ENCODE measurements at regions of chr18 and their contacts with region 1.

Region 1: GRCh38 chr18:46051731-46052461 is 20.2 kb downstream of the PSTPIP2 start:
- DNase-seq: no peak
- ATAC-seq: peak in 1 of 8 donors; percentile 27
- H3K4me3 ChIP-seq: no peak overlapping the region
- H3K27ac ChIP-seq: peak overlapping the region in 1 of 10 donors; percentile 20
- H3K4me1 ChIP-seq: peaks cover 0 to 42% (median 0%) of the 10 kb centered on the region in 9 donors
- H3K27me3 ChIP-seq: no peaks in the 10 kb centered on the region
- CTCF ChIP-seq: no peak

Region 2: DNA sequence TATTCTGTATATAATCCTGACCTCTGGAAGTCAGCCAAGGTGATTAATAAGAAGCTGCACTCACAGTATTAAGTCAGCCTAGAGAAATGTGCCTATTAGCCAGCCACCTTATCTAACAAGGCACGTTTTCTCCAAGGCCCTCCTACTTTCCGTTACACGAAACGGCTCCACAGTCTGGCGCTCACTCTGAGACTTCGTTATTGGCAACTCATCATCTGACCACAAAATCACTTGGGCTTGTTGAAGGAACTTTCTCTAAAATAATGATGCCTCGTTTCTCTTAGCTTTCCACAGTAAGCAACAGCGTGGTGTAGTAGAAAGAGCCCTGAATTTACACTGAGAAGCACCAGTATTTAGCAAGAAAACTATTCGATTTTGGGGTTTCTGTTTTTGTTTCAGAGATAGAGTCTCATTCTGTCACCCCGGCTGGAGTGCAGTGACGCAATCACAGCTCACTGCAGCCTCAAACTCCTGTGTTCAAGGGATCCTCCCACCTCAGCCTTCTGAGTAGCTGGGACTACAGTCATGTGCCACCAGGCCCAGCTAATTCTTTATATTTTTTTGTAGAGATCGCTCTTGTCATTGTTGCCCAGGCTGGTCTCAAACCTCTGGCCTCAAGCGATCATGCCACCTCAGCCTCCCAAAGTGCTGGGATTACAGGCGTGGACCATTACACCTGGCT is 381.5 kb before region 1 on chr18:
- intact Hi-C with region 1: loop called in 1 of 10 experiments (anchors 10 kb)
- DNase-seq: peak in 1 of 2 donors; percentile 17
- ATAC-seq: peak in 6 of 8 donors; percentile 50 to 77 (median 65)
- H3K4me3 ChIP-seq: peak overlapping the region in 1 of 10 donors; percentile 32
- H3K27ac ChIP-seq: peak overlapping the region in 1 of 10 donors; percentile 58
- H3K4me1 ChIP-seq: peaks cover 0 to 45% (median 19%) of the 10 kb centered on the region in 9 donors
- H3K27me3 ChIP-seq: no peaks in the 10 kb centered on the region
- CTCF ChIP-seq: no peak

Region 3: GRCh38 chr18:46073474-46074331 is 21.8 kb after region 1 on chr18:
- intact Hi-C with region 1: no loop called
- DNase-seq: peak in 1 of 2 donors; percentile 64
- ATAC-seq: peak in 6 of 8 donors; percentile 3 to 55 (median 42)
- H3K4me3 ChIP-seq: no peak overlapping the region
- H3K27ac ChIP-seq: no peak overlapping the region
- H3K4me1 ChIP-seq: peaks cover 3 to 45% (median 27%) of the 10 kb centered on the region in 9 donors
- H3K27me3 ChIP-seq: no peaks in the 10 kb centered on the region
- CTCF ChIP-seq: peak; percentile 32 to 76 (median 68)